ENCODE measurements at regions of chr7 and their contacts with region 1.

Region 1: DNA sequence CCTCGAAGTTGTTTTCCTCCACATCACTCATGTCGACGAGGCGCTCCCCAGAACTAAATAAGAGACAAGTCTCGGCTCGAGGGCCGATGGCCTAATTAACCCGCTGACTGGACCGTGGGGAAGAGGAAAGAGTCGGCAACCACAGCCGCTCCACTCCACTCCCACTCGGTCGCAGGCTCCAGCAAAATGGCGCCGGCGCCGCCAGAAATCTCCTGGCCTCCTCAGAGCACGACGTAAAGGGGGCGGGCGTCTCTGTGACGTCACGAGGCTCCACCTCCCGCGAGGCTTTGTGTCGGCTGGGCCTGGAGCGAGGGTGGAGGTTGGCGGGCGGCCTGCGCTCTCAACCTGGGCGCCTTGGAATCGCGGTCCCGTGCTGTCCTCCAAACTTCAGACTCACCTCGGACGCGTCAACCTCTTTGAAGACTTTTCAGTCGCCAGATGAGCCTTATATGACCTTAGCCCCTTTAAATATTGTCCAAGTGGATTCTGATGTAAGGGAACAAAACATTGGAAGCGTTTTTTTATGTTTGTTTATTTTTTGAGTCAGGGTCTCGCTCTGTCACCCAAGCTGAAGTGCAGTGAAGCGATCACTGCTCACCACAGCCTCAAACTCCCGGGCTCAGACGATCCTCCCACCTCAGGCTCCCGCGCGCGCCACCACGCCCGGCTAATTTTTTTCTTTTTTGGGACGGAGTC is at the start of gene TRA2A:
- DNase-seq: peak; percentile 86
- ATAC-seq: peak; percentile 98
- H3K4me3 ChIP-seq: peak within 1 kb of the TSS; percentile 92 to 94
- H3K27ac ChIP-seq: peak within 1 kb of the TSS; percentile 97
- H3K4me1 ChIP-seq: peaks cover 34% of the 10 kb centered on the region
- H3K27me3 ChIP-seq: no peaks in the 10 kb centered on the region
- CTCF ChIP-seq: no peak
- total RNA-seq, gene TRA2A: 106 TPM

Region 2: DNA sequence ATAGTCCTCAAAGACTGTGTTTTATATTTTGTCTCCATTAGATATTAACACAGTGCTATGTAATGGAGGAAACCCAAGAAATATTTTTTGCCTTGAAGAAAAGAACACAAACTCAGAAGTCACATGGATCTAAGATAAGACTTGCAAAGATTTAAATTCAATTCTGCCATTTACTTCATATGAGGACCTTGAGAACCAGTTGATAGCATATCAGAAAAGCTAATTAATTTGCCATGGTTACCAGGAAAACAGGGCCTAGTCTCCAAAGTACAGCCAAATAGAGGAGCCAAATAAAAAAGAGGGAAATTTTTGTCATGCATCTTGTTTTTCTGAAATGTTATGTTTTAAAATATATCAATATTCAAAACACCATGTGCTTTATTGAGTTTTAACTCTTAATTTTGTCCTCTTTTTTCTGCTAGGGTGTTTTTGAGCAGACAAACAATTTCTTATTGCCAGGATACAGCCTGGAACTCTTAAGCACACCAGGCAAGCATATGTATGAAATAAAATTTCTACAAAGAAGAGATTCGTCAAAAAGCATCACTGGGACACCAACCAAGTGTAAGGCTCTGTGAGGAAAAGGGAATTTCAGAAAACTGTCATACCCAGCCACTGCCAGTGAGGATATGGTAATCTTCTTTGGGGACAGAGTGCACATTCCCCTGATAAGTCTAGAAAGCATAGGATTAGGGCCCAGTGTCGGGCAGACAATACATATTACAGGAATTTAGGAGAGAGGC is 698.7 kb before region 1 on chr7:
- CTCF ChIA-PET with region 1: no interaction called
- POLR2A ChIA-PET with region 1: no interaction called
- in situ Hi-C with region 1: no loop called
- intact Hi-C with region 1: no loop called
- DNase-seq: no peak
- ATAC-seq: no peak
- H3K4me3 ChIP-seq: no peak overlapping the region
- H3K27ac ChIP-seq: no peak overlapping the region
- H3K4me1 ChIP-seq: no peaks in the 10 kb centered on the region; the same call in 1 of the 2 replicates
- H3K27me3 ChIP-seq: no peaks in the 10 kb centered on the region; the same call in 1 of the 2 replicates
- CTCF ChIP-seq: no peak

Region 3: GRCh38 chr7:23474094-23474828 is 57.7 kb before region 1 on chr7:
- CTCF ChIA-PET with region 1: no interaction called
- POLR2A ChIA-PET with region 1: interaction called, 8 read pairs
- in situ Hi-C with region 1: no loop called
- intact Hi-C with region 1: loop called (anchors 5 kb)
- DNase-seq: no peak
- ATAC-seq: peak; percentile 82
- H3K4me3 ChIP-seq: peak overlapping the region; percentile 88 to 98
- H3K27ac ChIP-seq: peak overlapping the region; percentile 100
- H3K4me1 ChIP-seq: peaks cover 25% of the 10 kb centered on the region
- H3K27me3 ChIP-seq: no peaks in the 10 kb centered on the region
- CTCF ChIP-seq: no peak

Region 4: DNA sequence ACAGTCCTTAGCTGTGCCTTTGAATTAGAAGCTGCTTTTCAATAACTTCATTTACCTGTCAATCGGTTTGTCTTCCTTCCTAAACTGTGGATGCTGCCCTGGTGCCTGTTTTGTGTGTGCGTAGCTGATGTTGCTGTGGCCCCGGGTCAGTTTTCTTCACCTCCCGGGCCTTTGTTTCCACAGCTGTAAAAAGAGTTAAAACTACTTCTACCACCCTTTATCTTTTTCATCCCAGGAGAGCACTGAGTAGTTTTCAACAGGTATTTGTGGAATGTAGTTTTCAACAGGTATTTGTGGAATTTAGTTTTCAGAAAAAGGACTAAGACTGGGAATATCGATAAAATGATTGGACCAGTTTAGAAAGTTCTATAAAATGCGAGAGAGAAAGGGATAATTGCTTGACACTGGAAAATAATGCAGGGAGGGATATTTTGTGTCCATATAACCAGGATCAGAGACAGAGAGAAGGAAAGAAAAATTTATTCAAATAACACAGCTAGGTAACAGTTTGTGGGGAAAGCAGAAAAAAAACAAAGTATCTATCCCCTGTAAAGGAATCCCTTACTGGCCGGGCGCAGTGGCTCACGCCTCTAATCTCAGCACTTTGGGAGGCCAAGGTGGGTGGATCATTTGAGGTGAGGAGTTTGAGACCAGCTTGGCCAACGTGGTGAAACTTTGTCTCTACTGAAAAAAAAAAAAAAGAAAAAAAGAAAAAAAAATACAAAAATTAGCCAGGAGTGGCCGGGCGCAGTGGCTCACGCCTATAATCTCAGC is 45.8 kb before region 1 on chr7:
- CTCF ChIA-PET with region 1: no interaction called
- POLR2A ChIA-PET with region 1: no interaction called
- in situ Hi-C with region 1: no loop called
- intact Hi-C with region 1: no loop called
- DNase-seq: no peak
- ATAC-seq: no peak
- H3K4me3 ChIP-seq: no peak overlapping the region
- H3K27ac ChIP-seq: 0 out of 2 replicates have a peak overlapping the region, but pooled peaks have one; percentile 41
- H3K4me1 ChIP-seq: peaks cover 4% of the 10 kb centered on the region
- H3K27me3 ChIP-seq: no peaks in the 10 kb centered on the region
- CTCF ChIP-seq: no peak

Measured in Panc1 (cell line).